ENCODE measurements at regions of chr18 and their contacts with region 1.

Region 1: DNA sequence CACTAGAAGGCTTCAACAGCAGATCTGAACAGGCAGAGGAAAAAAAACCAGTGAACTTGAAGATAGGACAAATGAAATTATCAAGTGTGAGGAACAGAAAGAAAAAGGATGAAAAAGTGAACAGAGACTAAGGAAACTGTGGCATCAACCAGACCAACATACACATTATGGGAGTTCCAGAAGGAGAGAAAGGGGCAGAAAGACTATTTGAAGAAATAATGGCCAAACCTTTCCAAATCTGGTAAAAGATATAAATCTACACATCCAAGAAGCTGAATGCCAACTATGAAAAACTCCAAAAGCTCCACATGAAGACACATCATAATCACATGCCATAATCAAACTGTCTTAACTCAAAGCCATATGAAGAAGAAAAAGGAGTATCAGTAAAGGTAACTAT is 79.8 kb downstream of the ROCK1 start:
- DNase-seq: no peak
- H3K4me3 ChIP-seq: no peak overlapping the region
- H3K4me3 Mint-ChIP-seq: no peak overlapping the region
- H3K27ac Mint-ChIP-seq: no peak overlapping the region
- H3K4me1 ChIP-seq: no peaks in the 10 kb centered on the region
- H3K4me1 Mint-ChIP-seq: no peaks in the 10 kb centered on the region
- H3K27me3 ChIP-seq: no peaks in the 10 kb centered on the region
- H3K27me3 Mint-ChIP-seq: no peaks in the 10 kb centered on the region
- CTCF ChIP-seq: no peak

Region 2: GRCh38 chr18:21012308-21012707 is 19.5 kb before region 1 on chr18:
- CTCF ChIA-PET with region 1: no interaction called
- POLR2A ChIA-PET with region 1: no interaction called
- intact Hi-C with region 1: loop called (anchors 2 kb)
- DNase-seq: no peak
- H3K4me3 ChIP-seq: no peak overlapping the region
- H3K4me3 Mint-ChIP-seq: no peak overlapping the region
- H3K27ac Mint-ChIP-seq: no peak overlapping the region
- H3K4me1 ChIP-seq: peaks cover 19% of the 10 kb centered on the region
- H3K4me1 Mint-ChIP-seq: peaks cover 18% of the 10 kb centered on the region
- H3K27me3 ChIP-seq: no peaks in the 10 kb centered on the region
- H3K27me3 Mint-ChIP-seq: no peaks in the 10 kb centered on the region
- CTCF ChIP-seq: no peak